HEK293 (cell line): ENCODE measurements at regions of chr17 and their contacts with region 1.

Region 1: DNA sequence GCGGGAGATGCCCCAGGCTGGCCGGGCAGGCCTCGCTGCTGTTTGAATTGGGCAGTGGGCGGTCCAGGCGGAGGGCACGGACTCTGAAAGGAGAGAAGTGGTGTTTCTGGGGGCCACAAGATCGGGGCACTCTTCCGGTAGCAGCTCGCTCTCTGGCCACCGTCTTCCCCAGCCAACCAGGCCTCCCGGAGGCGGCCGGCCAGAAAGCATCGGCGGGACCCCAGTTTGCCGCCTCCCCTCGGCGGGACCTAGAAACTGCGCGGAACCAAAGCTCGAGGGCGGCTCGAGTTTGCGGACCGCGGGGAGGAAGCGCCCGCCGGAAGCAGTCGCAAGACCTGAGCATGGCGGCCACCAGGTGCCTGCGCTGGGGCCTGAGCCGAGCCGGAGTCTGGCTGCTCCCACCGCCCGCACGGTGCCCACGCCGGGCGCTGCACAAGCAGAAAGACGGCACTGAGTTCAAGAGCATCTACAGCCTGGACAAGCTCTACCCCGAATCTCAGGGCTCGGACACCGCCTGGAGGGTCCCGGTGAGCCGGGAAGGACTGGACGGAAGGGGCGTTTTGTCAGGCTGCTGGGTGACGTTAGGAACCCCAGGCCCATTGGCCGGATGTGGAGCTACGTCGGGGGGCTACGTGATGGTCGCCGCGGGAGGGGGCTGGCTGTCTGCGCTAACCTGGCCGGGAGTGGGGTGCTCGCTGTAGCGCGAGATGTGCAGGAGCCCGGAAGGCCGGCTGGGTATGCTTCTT is at the start of gene MRPL58:
- H3K4me3 ChIP-seq: peak within 1 kb of the TSS; percentile 81
- H3K27ac ChIP-seq: peak within 1 kb of the TSS; percentile 83
- H3K4me1 ChIP-seq: peaks cover 26% of the 10 kb centered on the region
- CTCF ChIP-seq: peak; percentile 97

Region 2: GRCh38 chr17:74972107-74972972 is 40.2 kb before region 1 on chr17 and contains the start of gene HID1:
- CTCF ChIA-PET with region 1: interaction called, 12 read pairs
- POLR2A ChIA-PET with region 1: interaction called, 21 read pairs
- H3K4me3 ChIP-seq: peak within 1 kb of the TSS; percentile 74
- H3K27ac ChIP-seq: peak within 1 kb of the TSS; percentile 60; the same call in 1 of the 2 replicates
- H3K4me1 ChIP-seq: peaks cover 4% of the 10 kb centered on the region; the same call in 1 of the 2 replicates
- CTCF ChIP-seq: no peak; the same call in 1 of the 2 replicates

Region 3: GRCh38 chr17:74981979-74982662 is 30.4 kb before region 1 on chr17:
- CTCF ChIA-PET with region 1: interaction called, 18 read pairs
- POLR2A ChIA-PET with region 1: interaction called, 44 read pairs
- H3K4me3 ChIP-seq: peak overlapping the region; percentile 56
- H3K27ac ChIP-seq: peak overlapping the region; percentile 79
- H3K4me1 ChIP-seq: peaks cover 3% of the 10 kb centered on the region; the same call in 1 of the 2 replicates
- CTCF ChIP-seq: peak; percentile 80; the same call in 1 of the 2 replicates

Region 4: DNA sequence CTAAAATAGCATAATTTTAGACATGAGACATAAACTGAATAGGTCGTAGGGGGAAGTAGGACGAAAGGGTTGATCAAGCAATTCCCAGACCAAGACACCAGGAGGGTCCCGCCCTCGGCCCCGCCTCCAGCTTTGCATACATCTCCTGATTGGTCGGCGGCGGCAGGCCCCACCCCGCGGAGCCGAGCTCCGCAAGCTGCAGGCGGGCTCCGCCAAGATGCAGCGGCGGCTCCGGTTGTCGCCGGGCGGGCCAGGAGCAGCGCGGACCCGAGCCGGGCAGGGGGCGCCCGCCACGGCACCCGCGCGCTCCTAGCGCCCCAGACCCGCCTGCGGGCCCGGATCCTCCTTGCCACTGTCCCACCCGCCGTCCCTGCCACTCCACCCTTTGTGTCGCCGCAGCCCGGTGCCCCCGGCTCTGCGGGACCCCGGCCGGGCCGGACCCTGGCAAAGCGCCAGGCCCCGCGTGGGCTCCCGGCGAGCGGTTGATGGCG is 25.1 kb before region 1 on chr17 and contains the start of gene CDR2L:
- CTCF ChIA-PET with region 1: interaction called, 24 read pairs
- POLR2A ChIA-PET with region 1: interaction called, 44 read pairs
- H3K4me3 ChIP-seq: peak within 1 kb of the TSS; percentile 81
- H3K27ac ChIP-seq: peak within 1 kb of the TSS; percentile 88; the same call in 1 of the 2 replicates
- H3K4me1 ChIP-seq: peaks cover 3% of the 10 kb centered on the region; the same call in 1 of the 2 replicates
- CTCF ChIP-seq: no peak

Region 5: DNA sequence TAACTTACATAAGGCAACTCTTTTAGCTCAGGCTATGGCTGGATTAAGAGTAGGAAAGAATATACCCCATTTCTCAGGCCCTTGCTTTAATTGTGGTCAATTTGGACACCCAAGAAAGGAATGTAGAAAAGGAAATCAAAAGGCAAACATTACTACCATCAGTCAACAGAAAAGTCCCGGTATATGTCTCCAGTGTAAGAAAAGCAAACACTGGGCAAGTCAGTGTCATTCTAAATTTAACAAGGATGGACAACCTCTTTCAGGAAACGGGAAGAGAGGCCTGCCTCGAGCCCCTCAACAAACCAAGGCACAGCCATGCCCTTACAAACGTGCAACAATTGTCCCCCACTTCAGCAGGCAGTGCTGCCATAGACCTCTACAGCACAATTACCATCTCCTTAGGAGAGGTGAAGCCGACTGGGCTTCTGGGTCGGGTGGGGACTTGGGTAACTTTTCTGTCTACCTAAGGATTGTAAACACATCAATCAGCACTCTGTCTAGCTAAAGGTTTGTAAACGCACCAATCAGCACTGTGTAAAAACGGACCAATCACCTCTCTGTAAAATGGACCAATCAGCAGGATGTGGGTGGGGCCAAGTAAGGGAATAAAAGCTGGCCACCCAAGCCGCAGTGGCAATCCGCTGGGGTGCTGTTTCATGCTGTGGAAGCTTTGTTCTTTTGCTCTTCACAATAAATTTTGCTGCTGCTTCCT is 12.3 kb after region 1 on chr17:
- CTCF ChIA-PET with region 1: interaction called, 9 read pairs
- POLR2A ChIA-PET with region 1: interaction called, 19 read pairs
- H3K4me3 ChIP-seq: no peak overlapping the region
- H3K27ac ChIP-seq: no peak overlapping the region
- H3K4me1 ChIP-seq: no peaks in the 10 kb centered on the region
- CTCF ChIP-seq: no peak

Region 6: DNA sequence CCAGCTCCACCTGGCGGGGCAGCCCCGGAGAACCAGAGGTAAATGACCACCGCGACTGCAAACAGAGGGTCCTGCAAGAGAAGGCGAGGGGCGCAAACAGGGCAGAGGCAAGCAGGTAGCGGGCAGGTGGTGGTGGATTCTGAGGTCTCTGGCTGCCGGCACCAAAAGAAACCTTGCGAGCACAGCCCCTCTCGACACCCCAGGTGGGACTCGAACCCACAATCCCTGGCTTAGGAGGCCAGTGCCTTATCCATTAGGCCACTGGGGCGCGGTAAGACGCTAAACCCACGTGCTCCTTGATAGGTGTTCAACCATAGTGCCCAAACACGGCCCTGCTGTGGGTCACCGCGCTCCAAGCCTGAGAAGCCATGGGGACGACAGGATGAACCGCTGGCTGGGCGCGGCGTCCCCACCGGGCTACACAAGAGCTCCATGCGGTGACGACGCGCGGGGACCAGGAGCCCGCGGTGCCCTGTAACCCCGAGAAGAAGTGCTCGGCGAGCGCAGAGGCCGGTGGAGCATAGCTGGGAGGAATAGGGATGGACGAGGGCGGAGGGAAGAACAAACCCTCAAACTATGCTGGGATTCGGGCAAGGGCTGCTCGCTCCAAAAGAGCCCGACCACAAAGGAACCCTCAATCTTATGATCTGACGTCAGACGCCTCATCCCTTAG is 21.9 kb after region 1 on chr17:
- CTCF ChIA-PET with region 1: interaction called, 10 read pairs
- POLR2A ChIA-PET with region 1: interaction called, 46 read pairs
- H3K4me3 ChIP-seq: peak overlapping the region; percentile 60
- H3K27ac ChIP-seq: peak overlapping the region; percentile 94
- H3K4me1 ChIP-seq: peaks cover 19% of the 10 kb centered on the region
- CTCF ChIP-seq: peak; percentile 51

Region 7: GRCh38 chr17:75046582-75047289 is 34.2 kb after region 1 on chr17 and contains the starts of genes ATP5PD and KCTD2:
- CTCF ChIA-PET with region 1: no interaction called
- POLR2A ChIA-PET with region 1: interaction called, 19 read pairs
- H3K4me3 ChIP-seq: peak within 1 kb of the TSS; percentile 99
- H3K27ac ChIP-seq: peak within 1 kb of the TSS; percentile 92
- H3K4me1 ChIP-seq: peaks cover 8% of the 10 kb centered on the region; the same call in 1 of the 2 replicates
- CTCF ChIP-seq: 0 out of 2 replicates have a peak, but pooled peaks have one; percentile 45